Mucosa of descending colon (tissue), 3 donors: ENCODE measurements at regions of chr7 and their contacts with region 1.

Region 1: GRCh38 chr7:23712368-23713284 is 2.6 kb downstream of the STK31 start:
- DNase-seq: no peak
- ATAC-seq: peak; percentile 20
- H3K4me3 ChIP-seq: no peak overlapping the region
- H3K4me1 ChIP-seq: no peaks in the 10 kb centered on the region
- CTCF ChIP-seq: no peak

Region 2: GRCh38 chr7:23570592-23571200 is 141.9 kb before region 1 on chr7:
- intact Hi-C with region 1: loop called (anchors 2 to 5 kb)
- DNase-seq: peak in 2 of 3 donors; percentile 77 to 90
- ATAC-seq: peak; percentile 94
- H3K4me3 ChIP-seq: no peak overlapping the region
- H3K4me1 ChIP-seq: no peaks in the 10 kb centered on the region
- CTCF ChIP-seq: peak; percentile 51

Region 3: DNA sequence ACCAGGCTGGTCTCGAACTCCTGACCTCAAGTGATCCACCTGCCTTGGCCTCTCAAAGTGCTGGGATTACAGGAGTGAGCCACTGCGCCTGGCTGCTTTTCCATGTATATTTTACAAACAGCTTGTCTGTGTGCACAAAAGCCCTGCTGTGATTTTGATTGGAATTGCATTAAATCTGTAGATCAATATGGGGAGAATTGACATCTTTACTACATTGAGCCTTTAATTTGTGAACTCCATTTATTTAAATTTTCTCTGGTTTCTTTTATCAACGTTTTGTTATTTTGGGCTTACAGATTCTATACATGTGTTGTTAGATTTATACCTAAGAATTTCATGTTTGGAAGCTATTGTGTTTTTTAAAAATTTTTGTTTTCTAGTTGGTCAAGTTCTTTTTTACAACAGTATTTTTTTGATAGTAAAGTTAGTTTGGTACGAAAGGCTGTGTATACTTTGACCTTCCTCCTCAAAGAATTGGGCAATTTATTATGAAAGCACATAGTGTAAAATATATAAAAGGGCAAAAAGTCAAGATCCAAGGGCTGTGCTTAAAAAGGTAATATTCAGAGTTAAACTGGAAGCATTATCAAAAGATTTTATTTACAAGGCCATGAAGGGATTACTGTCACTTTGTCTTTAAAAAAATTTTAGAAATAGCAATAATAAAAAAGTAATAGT is 90.2 kb after region 1 on chr7:
- intact Hi-C with region 1: no loop called
- DNase-seq: no peak
- ATAC-seq: no peak
- H3K4me3 ChIP-seq: no peak overlapping the region
- H3K4me1 ChIP-seq: no peaks in the 10 kb centered on the region
- CTCF ChIP-seq: no peak